ENCODE measurements at regions of chr6 and their contacts with region 1.

Region 1: GRCh38 chr6:156703719-156704118 is 73.5 kb upstream of the ARID1B start:
- DNase-seq: no peak
- H3K4me3 ChIP-seq: no peak overlapping the region
- H3K27ac ChIP-seq: no peak overlapping the region
- H3K4me1 ChIP-seq: no peaks in the 10 kb centered on the region
- H3K27me3 ChIP-seq: no peaks in the 10 kb centered on the region
- CTCF ChIP-seq: no peak

Region 2: DNA sequence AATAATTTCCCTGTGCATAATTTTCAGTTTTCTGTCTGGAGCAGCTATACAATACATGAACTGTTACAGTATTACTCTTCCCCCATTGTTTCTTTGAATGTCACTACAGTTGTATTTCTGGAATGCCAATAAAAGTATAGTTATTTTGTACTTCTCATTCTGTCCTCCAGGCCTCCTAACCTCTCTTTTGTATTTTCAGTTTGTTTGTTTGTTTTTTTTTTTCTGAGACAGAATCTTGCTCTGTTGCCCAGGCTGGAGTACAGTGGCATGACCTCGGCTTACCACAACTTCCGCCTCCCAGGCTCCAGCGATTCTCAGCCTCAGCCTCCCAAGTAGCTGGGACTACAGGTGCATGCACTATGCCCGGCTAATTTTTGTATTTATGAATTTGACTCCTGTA is 56.7 kb after region 1 on chr6:
- CTCF ChIA-PET with region 1: no interaction called
- POLR2A ChIA-PET with region 1: interaction called, 16 read pairs
- intact Hi-C with region 1: no loop called
- DNase-seq: no peak
- H3K4me3 ChIP-seq: no peak overlapping the region
- H3K27ac ChIP-seq: no peak overlapping the region
- H3K4me1 ChIP-seq: no peaks in the 10 kb centered on the region
- H3K27me3 ChIP-seq: no peaks in the 10 kb centered on the region
- CTCF ChIP-seq: no peak

Region 3: GRCh38 chr6:158061709-158062461 is 1358.2 kb after region 1 on chr6:
- CTCF ChIA-PET with region 1: interaction called, 10 read pairs
- POLR2A ChIA-PET with region 1: no interaction called
- intact Hi-C with region 1: no loop called
- DNase-seq: peak; percentile 33
- H3K4me3 ChIP-seq: no peak overlapping the region
- H3K27ac ChIP-seq: no peak overlapping the region
- H3K4me1 ChIP-seq: peaks cover 18% of the 10 kb centered on the region
- H3K27me3 ChIP-seq: no peaks in the 10 kb centered on the region
- CTCF ChIP-seq: no peak